H1 (cell line): ENCODE measurements at regions of chr1 and their contacts with region 1.

Region 1: GRCh38 chr1:201447911-201448871 is 20.8 kb downstream of the PHLDA3 start:
- DNase-seq: peak; percentile 79 to 84
- H3K4me3 ChIP-seq: peak overlapping the region in 3 of 4 experiments; percentile 7 to 33 (median 17); a peak in 3 of 8 replicates
- H3K27ac ChIP-seq: no peak overlapping the region
- H3K4me1 ChIP-seq: peaks cover 4 to 20% (median 15%) of the 10 kb centered on the region in 4 experiments
- H3K27me3 ChIP-seq: no peaks in the 10 kb centered on the region; a peak in 1 of 7 replicates
- CTCF ChIP-seq: peak; percentile 86 to 92 (median 91)
- EP300 ChIP-seq: no peak
- POLR2A ChIP-seq: no peak
- RAD21 ChIP-seq: peak; percentile 68 to 75

Region 2: GRCh38 chr1:201320163-201320788 is 127.9 kb before region 1 on chr1:
- CTCF ChIA-PET with region 1: no interaction called
- POLR2A ChIA-PET with region 1: no interaction called
- DNase-seq: no peak
- H3K4me3 ChIP-seq: no peak overlapping the region
- H3K27ac ChIP-seq: no peak overlapping the region
- H3K4me1 ChIP-seq: no peaks in the 10 kb centered on the region
- H3K27me3 ChIP-seq: no peaks in the 10 kb centered on the region; a peak in 1 of 7 replicates
- CTCF ChIP-seq: no peak
- EP300 ChIP-seq: no peak
- POLR2A ChIP-seq: no peak
- RAD21 ChIP-seq: no peak

Region 3: GRCh38 chr1:201408176-201408833 is 39.9 kb before region 1 on chr1:
- CTCF ChIA-PET with region 1: interaction called, 11 read pairs
- POLR2A ChIA-PET with region 1: no interaction called
- DNase-seq: peak; percentile 80 to 98
- H3K4me3 ChIP-seq: no peak overlapping the region
- H3K27ac ChIP-seq: no peak overlapping the region
- H3K4me1 ChIP-seq: peaks cover 0 to 5% (median 0%) of the 10 kb centered on the region in 4 experiments; a peak in 2 of 7 replicates
- H3K27me3 ChIP-seq: no peaks in the 10 kb centered on the region; a peak in 1 of 7 replicates
- CTCF ChIP-seq: peak; percentile 91 to 99 (median 99)
- EP300 ChIP-seq: no peak
- POLR2A ChIP-seq: no peak
- RAD21 ChIP-seq: peak; percentile 81 to 82

Region 4: DNA sequence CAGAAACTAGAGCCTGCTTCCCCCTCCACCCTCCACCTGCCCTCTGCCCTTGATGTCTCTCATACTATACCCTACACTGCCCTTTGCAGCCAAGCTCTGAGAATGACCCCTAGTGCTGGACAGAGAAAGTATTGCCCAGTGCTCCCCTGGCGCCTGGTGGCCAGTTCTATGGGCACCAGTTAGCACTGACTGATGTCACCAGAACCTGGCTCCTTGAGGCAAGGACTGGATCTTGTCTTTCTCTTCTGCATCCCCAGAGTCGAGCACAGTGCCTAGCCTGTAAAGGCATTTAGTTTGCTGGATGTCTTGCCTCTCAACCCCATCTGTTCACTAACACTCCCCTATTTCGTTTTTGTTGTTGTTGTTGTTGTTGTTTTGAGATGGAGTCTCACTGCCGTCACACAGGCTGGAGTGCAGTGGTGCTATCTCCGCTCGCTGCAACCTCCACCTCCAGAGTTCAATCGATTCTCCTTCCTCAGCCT is 14.9 kb after region 1 on chr1:
- CTCF ChIA-PET with region 1: interaction called, 155 read pairs
- POLR2A ChIA-PET with region 1: interaction called, 12 read pairs
- DNase-seq: no peak
- H3K4me3 ChIP-seq: no peak overlapping the region
- H3K27ac ChIP-seq: no peak overlapping the region
- H3K4me1 ChIP-seq: peaks cover 0 to 10% (median 4%) of the 10 kb centered on the region in 4 experiments; a peak in 5 of 7 replicates
- H3K27me3 ChIP-seq: peaks cover 0 to 6% (median 4%) of the 10 kb centered on the region in 4 experiments; a peak in 6 of 7 replicates
- CTCF ChIP-seq: peak; percentile 52 to 91 (median 68)
- EP300 ChIP-seq: no peak
- POLR2A ChIP-seq: peak in 1 of 2 experiments; percentile 70; a peak in 2 of 3 replicates
- RAD21 ChIP-seq: peak; percentile 44 to 60

Region 5: DNA sequence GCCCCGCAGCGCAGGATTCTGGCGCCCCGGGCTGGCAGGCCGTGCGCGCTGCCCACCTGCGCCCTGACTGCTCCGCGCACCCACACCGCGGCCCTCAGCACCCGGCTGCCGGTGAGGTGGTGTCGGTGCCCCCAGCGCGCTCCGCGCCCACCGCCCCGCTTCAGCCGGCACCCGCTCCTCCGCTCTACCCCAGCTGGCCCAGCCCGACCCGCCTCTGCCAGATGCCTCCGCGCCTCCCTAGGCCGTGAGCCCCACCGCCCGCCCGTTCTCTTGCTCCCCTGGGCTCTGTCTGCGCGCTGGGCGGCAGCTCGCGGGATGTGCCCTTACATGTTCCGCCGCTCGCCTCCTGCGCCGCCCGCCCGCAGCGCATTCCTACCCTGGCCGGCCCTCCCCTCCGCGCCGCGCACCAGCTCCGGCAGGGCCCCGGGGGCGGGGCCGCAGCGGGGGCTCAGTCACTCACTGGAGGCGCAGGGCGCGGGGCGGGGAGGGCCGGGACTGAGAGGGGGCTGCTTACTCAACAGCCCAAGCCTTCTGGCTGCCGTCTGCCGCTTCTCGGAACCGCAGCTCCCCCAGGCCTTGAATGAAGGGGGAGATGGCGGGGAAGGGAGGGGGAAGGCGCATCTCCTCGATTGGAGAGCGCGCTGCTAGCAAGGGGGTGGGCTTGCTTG is 20.8 kb after region 1 on chr1 and contains the start of gene PHLDA3:
- CTCF ChIA-PET with region 1: interaction called, 155 read pairs
- POLR2A ChIA-PET with region 1: interaction called, 12 read pairs
- DNase-seq: peak; percentile 77 to 82
- H3K4me3 ChIP-seq: peak within 1 kb of the TSS; percentile 64 to 75 (median 69)
- H3K27ac ChIP-seq: no peak within 1 kb of the TSS; the same call in 1 of the 2 replicates
- H3K4me1 ChIP-seq: peaks cover 0 to 19% (median 11%) of the 10 kb centered on the region in 4 experiments; a peak in 6 of 7 replicates
- H3K27me3 ChIP-seq: peaks cover 5 to 35% (median 31%) of the 10 kb centered on the region in 4 experiments
- CTCF ChIP-seq: no peak
- EP300 ChIP-seq: no peak
- POLR2A ChIP-seq: no peak; a peak in 1 of 3 replicates
- RAD21 ChIP-seq: no peak
- total RNA-seq, gene PHLDA3: 27.5 and 27.7 TPM in 2 replicates

Region 6: DNA sequence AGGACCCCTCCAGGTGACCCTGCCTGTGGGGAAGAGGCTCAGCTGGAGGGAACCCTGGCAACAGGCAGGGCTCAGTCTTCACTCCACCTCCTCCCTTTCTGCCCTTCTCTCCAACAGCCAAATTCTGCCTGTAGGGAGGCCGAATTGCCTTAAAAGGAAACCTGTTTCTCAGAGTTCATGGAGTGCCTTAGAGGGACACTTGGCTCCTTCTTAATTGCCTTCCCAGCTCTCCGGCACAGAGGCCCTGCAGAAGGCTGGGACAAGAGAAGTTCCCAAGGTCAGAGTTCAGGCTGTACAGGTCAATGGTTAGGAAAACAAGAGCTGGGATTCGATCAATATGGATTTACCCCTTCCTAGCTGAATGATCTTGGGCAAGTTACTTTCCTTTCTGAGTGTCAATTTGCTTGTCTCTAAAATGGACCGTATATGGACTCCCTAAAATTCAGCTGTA is 52.5 kb after region 1 on chr1:
- CTCF ChIA-PET with region 1: interaction called, 13 read pairs
- POLR2A ChIA-PET with region 1: interaction called, 3 read pairs
- DNase-seq: no peak
- H3K4me3 ChIP-seq: no peak overlapping the region
- H3K27ac ChIP-seq: peak overlapping the region; percentile 63
- H3K4me1 ChIP-seq: peaks cover 11 to 27% (median 21%) of the 10 kb centered on the region in 4 experiments
- H3K27me3 ChIP-seq: peaks cover 0 to 2% (median under 1%) of the 10 kb centered on the region in 4 experiments; a peak in 4 of 7 replicates
- CTCF ChIP-seq: no peak
- EP300 ChIP-seq: no peak
- POLR2A ChIP-seq: no peak
- RAD21 ChIP-seq: no peak

Region 7: GRCh38 chr1:201686714-201687455 is 238.7 kb after region 1 on chr1:
- CTCF ChIA-PET with region 1: no interaction called
- POLR2A ChIA-PET with region 1: no interaction called
- DNase-seq: no peak
- H3K4me3 ChIP-seq: peak overlapping the region in 2 of 4 experiments; percentile 2 to 27; a peak in 3 of 8 replicates
- H3K27ac ChIP-seq: no peak overlapping the region
- H3K4me1 ChIP-seq: peaks cover 13 to 31% (median 23%) of the 10 kb centered on the region in 4 experiments
- H3K27me3 ChIP-seq: no peaks in the 10 kb centered on the region
- CTCF ChIP-seq: no peak
- EP300 ChIP-seq: no peak; a peak in 1 of 3 replicates
- POLR2A ChIP-seq: no peak
- RAD21 ChIP-seq: 0 out of 4 replicates have a peak, but pooled peaks of 1 of the 2 experiments have one; percentile 1